Dendritic cell treated with granulocyte-macrophage colony-stimulating factor and Interleukin-4, amounts not matched to agents 40 ng/mL and 50 ng/mL, for 4 days (primary cell): ENCODE measurements at regions of chr13 and their contacts with region 1.

Region 1: DNA sequence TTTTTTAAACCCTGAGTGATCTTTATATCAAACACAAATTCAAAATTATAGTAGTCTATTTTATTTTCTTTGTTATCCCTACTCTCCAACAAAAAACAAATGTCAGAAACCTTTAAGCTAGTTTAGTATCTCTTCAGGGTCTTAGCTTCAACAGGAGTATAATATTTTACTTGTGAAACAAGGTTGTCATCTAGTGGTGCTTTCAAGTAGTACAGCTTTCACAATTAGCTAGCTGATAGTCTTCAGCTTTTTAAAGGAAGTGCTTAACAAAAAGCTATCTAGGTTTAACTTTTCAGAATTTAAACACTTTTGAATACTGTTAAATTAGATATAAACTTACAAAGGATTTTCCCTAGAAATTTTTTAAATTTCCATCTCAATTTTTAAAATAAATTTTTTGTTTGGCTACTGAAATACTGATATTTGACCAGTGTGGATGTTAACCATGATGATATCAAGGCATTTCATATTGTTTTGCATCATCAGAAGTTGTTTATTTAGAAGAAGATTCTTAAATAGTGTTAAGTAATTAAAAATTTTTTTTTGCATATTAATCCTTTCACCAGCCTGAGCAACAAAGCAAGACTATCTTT is 34.2 kb downstream of the TDRD3 start:
- H3K4me3 Mint-ChIP-seq: no peak overlapping the region
- H3K27ac Mint-ChIP-seq: no peak overlapping the region
- H3K4me1 Mint-ChIP-seq: no peaks in the 10 kb centered on the region
- H3K27me3 Mint-ChIP-seq: no peaks in the 10 kb centered on the region

Region 2: GRCh38 chr13:59391696-59392095 is 1039.5 kb before region 1 on chr13:
- intact Hi-C with region 1: loop called (anchors 2 kb)
- H3K4me3 Mint-ChIP-seq: no peak overlapping the region
- H3K27ac Mint-ChIP-seq: no peak overlapping the region
- H3K4me1 Mint-ChIP-seq: no peaks in the 10 kb centered on the region
- H3K27me3 Mint-ChIP-seq: peaks cover 2% of the 10 kb centered on the region

Region 3: GRCh38 chr13:60335531-60335930 is 95.7 kb before region 1 on chr13:
- intact Hi-C with region 1: loop called (anchors 5 kb)
- H3K4me3 Mint-ChIP-seq: no peak overlapping the region
- H3K27ac Mint-ChIP-seq: no peak overlapping the region
- H3K4me1 Mint-ChIP-seq: no peaks in the 10 kb centered on the region
- H3K27me3 Mint-ChIP-seq: peaks cover 6% of the 10 kb centered on the region

Region 4: DNA sequence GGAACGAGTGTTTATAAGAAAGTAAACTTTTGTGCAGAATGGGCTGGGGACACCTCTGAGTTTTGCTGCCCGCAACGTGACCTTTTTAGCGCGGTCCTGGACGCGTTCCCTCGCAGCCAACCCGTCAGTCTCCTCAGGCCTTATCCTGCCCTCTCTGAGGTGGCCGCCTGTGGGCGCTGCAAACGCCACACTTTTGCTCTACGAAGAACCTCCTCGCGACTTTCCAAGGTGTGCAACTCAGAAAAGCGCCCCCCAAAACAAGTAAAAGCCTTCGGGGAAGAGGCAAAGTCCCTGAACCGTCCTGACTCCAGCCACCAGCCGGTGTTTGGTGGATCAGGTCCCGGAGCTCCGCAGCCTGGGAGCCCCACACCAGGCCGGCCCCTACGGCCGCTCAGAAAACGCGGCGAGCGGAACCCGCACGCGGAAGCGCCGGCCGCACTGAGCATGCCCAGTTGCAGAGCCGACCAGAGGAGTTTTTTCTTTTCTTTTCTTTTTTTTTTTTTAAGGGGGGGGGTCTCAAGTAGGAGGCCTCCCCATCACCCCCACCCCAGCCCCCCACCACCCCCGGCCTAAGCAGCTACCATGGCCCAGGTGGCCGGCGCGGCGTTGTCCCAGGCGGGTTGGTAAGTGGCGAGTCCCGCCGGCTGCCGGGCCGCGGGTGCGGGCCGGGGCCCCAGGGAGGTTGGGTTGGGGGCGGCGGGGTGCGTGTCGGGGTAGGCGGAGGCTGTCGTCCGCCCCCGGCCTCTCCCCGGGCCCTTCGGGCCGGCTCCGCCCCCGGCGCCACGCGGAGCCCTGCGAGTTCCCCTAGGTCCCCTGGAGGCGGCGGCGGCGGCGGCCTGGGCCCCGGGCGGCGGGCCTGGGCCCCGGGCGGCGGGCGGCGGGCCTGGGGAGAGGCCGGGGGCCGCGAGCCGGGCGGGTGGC is 34.2 kb before region 1 on chr13 and contains the start of gene TDRD3:
- intact Hi-C with region 1: loop called (anchors 2 kb)
- H3K4me3 Mint-ChIP-seq: peak within 1 kb of the TSS; percentile 90
- H3K27ac Mint-ChIP-seq: peak within 1 kb of the TSS; percentile 97
- H3K4me1 Mint-ChIP-seq: peaks cover 16% of the 10 kb centered on the region
- H3K27me3 Mint-ChIP-seq: no peaks in the 10 kb centered on the region